Dorsolateral prefrontal cortex (tissue), 120 donors: ENCODE measurements at regions of chr15 and their contacts with region 1.

Region 1: DNA sequence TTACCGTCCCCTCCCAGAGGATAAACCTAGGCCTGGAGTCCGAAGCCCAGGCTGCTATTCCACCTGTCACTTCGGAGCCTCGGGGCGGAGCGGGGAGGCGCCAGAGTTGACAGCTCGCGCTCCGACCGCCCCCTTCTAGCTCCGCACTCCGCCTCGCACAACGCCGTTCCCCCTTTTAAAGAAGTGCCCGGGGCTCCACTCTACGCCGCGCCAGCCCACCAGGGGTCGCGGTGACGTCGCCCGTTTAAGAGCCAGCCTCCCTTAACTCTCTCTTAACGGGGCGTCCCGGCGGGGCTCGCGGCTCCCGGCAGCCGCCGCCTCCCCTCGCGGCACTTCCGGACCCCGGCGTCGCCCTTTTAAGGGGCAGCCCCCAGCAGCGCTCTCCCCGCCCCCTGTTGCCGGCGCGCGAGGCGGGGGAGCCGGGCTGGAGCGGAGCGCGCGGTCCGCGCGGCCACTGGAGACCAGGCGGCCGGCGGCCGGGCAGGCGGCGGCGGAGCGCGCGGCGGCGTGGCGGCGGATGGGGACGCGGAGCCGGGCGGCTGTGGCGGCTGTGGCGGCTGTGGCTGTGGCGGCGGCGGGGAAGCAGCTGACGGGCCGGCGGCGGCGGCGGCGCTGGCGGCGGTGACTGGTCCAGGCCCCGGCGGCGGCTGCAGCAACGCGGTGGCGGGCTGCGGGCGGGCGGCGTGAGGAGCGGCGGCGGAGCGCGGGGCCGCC is at the start of gene INAFM2:
- DNase-seq: peak; percentile 64 to 89 (median 84)
- H3K4me3 ChIP-seq: peak within 1 kb of the TSS; percentile 53 to 92 (median 78)
- H3K27ac ChIP-seq: peak within 1 kb of the TSS in 57 of 59 donors; percentile 38 to 92 (median 81)
- H3K27me3 ChIP-seq: no peaks in the 10 kb centered on the region
- CTCF ChIP-seq: peak; percentile 30 to 79 (median 63)
- total RNA-seq, gene INAFM2: 15.6 to 46.5 (median 29.8) TPM

Region 2: GRCh38 chr15:40338041-40338657 is 14.8 kb after region 1 on chr15:
- intact Hi-C with region 1: loop called (anchors 1 to 2 kb)
- DNase-seq: peak in 4 of 10 donors; percentile 31 to 57 (median 50)
- H3K4me3 ChIP-seq: peak overlapping the region in 9 of 59 donors; percentile 3 to 67 (median 57)
- H3K27ac ChIP-seq: peak overlapping the region in 52 of 59 donors; percentile 79 to 100 (median 98)
- H3K27me3 ChIP-seq: no peaks in the 10 kb centered on the region
- CTCF ChIP-seq: peak; percentile 19 to 78 (median 66)

Region 3: GRCh38 chr15:40357723-40358470 is 34.5 kb after region 1 on chr15 and contains the start of gene DISP2:
- intact Hi-C with region 1: loop called in 1 of 2 experiments (anchors 5 kb)
- DNase-seq: peak; percentile 70 to 93 (median 83)
- H3K4me3 ChIP-seq: peak within 1 kb of the TSS; percentile 50 to 83 (median 72)
- H3K27ac ChIP-seq: peak within 1 kb of the TSS in 54 of 59 donors; percentile 26 to 90 (median 74)
- H3K27me3 ChIP-seq: no peaks in the 10 kb centered on the region
- CTCF ChIP-seq: peak in 37 of 56 donors; percentile 2 to 61 (median 27)
- total RNA-seq, gene DISP2: 11.5 to 58.0 (median 37.6) TPM

Region 4: GRCh38 chr15:40367686-40368611 is 44.6 kb after region 1 on chr15:
- intact Hi-C with region 1: loop called in 1 of 2 experiments (anchors 5 kb)
- DNase-seq: peak; percentile 67 to 85 (median 78)
- H3K4me3 ChIP-seq: peak overlapping the region in 53 of 59 donors; percentile 1 to 59 (median 38)
- H3K27ac ChIP-seq: peak overlapping the region in 43 of 59 donors; percentile 3 to 87 (median 48)
- H3K27me3 ChIP-seq: no peaks in the 10 kb centered on the region
- CTCF ChIP-seq: peak; percentile 33 to 96 (median 80)

Region 5: GRCh38 chr15:40405501-40406381 is 82.3 kb after region 1 on chr15 and contains the start of gene IVD:
- intact Hi-C with region 1: loop called in 1 of 2 experiments (anchors 5 kb)
- DNase-seq: peak; percentile 93 to 99 (median 97)
- H3K4me3 ChIP-seq: peak within 1 kb of the TSS; percentile 69 to 99 (median 87)
- H3K27ac ChIP-seq: peak within 1 kb of the TSS; percentile 67 to 97 (median 92)
- H3K27me3 ChIP-seq: no peaks in the 10 kb centered on the region
- CTCF ChIP-seq: peak in 39 of 56 donors; percentile 4 to 59 (median 31)
- total RNA-seq, gene IVD: 64.9 to 126 (median 91.0) TPM

Region 6: DNA sequence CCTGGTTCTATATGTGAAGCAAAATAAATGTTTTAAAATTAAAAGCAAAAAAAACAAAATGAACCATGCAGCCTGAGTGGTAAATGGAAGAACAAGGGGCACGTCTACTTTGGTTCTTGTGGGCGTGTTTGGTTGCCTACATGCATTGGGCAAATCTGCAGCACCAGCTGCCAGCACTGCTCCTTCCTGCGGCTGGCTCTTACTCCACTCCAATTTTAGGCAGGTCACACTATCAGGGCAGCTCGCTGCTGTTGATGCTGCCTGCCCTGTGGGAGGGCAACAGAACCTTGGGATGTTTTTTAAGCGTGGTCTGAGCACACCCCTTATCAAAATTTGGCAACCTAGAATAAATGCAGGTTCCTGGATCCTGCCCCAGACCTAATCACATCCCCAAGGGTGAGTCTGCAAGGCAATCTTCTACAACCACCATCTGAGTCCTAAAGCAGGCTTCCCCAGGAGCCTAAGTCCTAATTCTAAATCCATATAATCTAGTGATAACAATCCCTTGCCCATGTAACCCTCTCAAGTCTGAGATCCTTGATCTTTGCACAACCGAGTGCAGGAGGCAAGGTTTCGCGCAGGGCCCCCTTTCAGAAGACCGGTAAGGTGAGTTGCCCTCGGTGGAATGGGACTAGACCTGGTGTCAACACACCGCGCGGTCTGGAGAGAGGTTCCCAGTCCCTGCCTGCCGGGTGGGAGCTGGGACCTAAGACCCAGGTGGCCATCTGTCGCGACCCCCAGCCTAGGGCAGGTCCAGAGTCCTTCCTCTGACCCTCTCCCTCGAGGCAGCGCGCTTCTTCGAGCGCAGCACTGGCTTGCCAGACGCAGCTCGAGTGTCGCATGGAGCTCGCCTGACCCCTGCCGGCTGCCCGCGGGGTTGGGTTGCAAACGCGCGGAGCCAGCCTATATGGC is 98.1 kb after region 1 on chr15:
- intact Hi-C with region 1: loop called (anchors 2 to 5 kb)
- DNase-seq: peak; percentile 67 to 89 (median 80)
- H3K4me3 ChIP-seq: peak overlapping the region in 21 of 59 donors; percentile 9 to 33 (median 20)
- H3K27ac ChIP-seq: peak overlapping the region in 25 of 59 donors; percentile 0 to 66 (median 33)
- H3K27me3 ChIP-seq: no peaks in the 10 kb centered on the region
- CTCF ChIP-seq: peak; percentile 56 to 99 (median 92)